K562 (cell line): ENCODE measurements at regions of chr13 and their contacts with region 1.

Region 1: DNA sequence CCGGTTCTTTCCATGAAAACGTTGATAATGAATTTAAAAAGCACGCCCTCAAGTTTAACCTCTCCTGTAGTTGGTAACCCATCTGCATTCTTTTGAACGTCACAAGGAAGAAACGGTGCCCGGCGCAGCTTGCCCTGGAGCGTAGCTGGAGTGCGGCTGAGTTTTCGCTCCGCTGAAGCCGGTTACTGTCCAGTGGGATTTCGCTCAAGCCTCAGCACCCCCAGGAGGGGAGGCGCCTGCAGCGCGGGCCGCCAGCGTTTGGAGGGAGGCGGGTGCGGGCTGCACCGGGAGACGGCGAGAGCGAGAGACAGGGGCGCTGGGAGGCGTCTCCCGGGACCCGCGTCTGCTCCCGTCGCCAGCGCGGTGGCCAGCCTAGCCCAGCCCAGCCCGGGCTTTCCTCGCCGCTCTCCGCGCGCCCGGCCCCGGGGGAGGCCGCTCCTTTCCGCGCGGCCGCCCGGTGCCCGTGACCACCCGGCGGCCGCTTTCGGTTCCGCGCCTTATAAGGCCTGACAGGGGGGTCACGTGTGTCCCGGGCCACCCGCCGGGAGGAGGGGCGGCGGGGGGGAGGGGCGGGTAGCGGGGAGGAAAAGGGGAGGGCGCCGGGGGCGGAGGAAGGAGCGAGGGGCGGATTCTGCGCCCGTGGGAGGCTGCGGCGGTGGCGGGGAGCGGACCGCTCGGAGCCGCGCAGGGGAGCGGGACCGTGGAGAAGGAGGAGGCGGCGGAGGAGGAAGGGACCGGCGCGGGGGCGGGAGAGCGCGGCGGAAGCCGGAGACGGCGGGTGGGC is 8.3 kb upstream of the DGKH start:
- DNase-seq: peak; percentile 83 to 94 (median 88)
- ATAC-seq: peak; percentile 87
- H3K4me3 ChIP-seq: peak overlapping the region; percentile 51
- H3K27ac ChIP-seq: peak overlapping the region; percentile 72
- H3K4me1 ChIP-seq: peaks cover 10 to 13% of the 10 kb centered on the region in 2 experiments; a peak in 4 of 5 replicates
- H3K27me3 ChIP-seq: no peaks in the 10 kb centered on the region
- CTCF ChIP-seq: 0 out of 6 replicates have a peak, but pooled peaks of 1 of the 3 experiments have one; percentile 12
- EP300 ChIP-seq: no peak
- POLR2A ChIP-seq: peak; percentile 76
- RAD21 ChIP-seq: peak in 1 of 2 experiments; percentile 8; a peak in 1 of 4 replicates

Region 2: GRCh38 chr13:41916173-41916954 is 123.8 kb before region 1 on chr13:
- CTCF ChIA-PET with region 1: no interaction called
- POLR2A ChIA-PET with region 1: no interaction called
- in situ Hi-C with region 1: no loop called
- intact Hi-C with region 1: loop called (anchors 10 kb)
- DNase-seq: peak in 2 of 4 experiments; percentile 18 to 35
- ATAC-seq: peak; percentile 63
- H3K4me3 ChIP-seq: no peak overlapping the region
- H3K27ac ChIP-seq: peak overlapping the region; percentile 35; the same call in 1 of the 3 replicates
- H3K4me1 ChIP-seq: peaks cover 0 to 17% of the 10 kb centered on the region in 2 experiments; a peak in 4 of 5 replicates
- H3K27me3 ChIP-seq: no peaks in the 10 kb centered on the region
- CTCF ChIP-seq: no peak
- EP300 ChIP-seq: no peak
- POLR2A ChIP-seq: no peak
- RAD21 ChIP-seq: no peak

Region 3: DNA sequence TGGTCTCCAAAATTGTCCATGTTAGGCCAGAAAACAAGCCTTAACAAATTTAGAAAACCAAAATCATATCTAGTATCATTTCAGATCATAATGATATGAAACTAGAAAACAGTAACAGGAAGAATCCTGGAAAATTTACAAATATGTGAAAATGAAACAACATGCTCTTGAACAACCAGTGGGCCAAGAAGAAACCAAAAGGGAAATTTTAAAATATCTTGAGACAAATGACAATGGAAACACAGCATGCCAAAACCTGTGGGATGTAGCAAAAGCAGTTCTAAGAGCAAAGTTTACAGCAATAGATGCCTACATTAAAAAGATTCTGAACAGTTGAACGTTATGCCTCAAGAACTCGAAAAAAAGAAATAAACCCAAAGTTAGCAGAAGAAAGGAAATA is 111.8 kb before region 1 on chr13:
- CTCF ChIA-PET with region 1: no interaction called
- POLR2A ChIA-PET with region 1: no interaction called
- in situ Hi-C with region 1: no loop called
- intact Hi-C with region 1: no loop called
- DNase-seq: no peak
- ATAC-seq: no peak
- H3K4me3 ChIP-seq: no peak overlapping the region
- H3K27ac ChIP-seq: no peak overlapping the region
- H3K4me1 ChIP-seq: no peaks in the 10 kb centered on the region
- H3K27me3 ChIP-seq: no peaks in the 10 kb centered on the region
- CTCF ChIP-seq: no peak
- EP300 ChIP-seq: no peak
- POLR2A ChIP-seq: no peak
- RAD21 ChIP-seq: no peak

Region 4: DNA sequence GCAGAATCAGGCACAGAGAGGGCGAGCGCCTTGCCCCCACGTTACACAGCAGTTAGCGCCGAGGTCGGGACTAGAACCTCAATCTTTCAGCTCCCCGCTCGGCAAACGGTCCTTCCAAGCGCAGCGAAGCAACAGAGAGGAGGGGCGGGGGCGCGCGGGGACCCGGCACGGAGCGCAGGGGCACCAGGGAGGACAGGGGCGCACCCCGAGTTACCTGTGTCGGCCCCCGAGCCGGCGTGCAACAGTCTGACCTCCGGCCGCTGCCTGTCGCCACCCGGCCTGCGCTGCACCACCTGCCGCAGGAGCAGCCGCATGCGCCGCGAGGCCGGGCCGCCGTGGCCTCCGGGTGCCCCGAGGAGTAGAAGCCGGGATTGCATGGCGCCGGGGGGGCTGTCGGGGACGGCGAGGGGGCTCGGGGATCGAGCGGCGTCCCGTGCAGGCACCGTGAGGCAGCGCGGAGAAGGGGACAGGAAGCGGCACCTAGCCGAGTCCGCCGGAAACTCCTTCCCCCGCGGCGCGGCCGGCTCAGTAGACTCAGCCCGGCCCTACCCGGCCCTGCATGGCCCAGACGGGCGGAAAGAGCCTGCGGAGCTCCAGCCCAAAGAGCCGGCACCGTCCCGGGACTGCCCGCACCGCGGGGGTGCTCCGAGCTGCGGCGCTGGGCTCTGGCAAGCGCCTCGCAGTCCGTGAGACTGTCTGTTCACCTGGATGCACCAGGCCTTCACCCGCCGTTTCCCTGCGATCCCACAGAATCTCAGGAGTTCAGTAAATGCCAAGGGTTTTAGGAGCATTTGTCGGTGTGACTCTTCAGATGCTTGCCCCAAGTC is 79.3 kb before region 1 on chr13 and contains the start of gene VWA8:
- CTCF ChIA-PET with region 1: no interaction called
- POLR2A ChIA-PET with region 1: no interaction called
- in situ Hi-C with region 1: no loop called
- intact Hi-C with region 1: loop called (anchors 5 kb)
- DNase-seq: peak; percentile 53 to 82 (median 66)
- ATAC-seq: peak; percentile 91
- H3K4me3 ChIP-seq: peak within 1 kb of the TSS; percentile 88
- H3K27ac ChIP-seq: peak within 1 kb of the TSS; percentile 83
- H3K4me1 ChIP-seq: peaks cover 3 to 9% of the 10 kb centered on the region in 2 experiments; a peak in 3 of 5 replicates
- H3K27me3 ChIP-seq: no peaks in the 10 kb centered on the region
- CTCF ChIP-seq: no peak
- EP300 ChIP-seq: no peak
- POLR2A ChIP-seq: peak; percentile 73
- RAD21 ChIP-seq: no peak
- polyA plus RNA-seq, gene VWA8: 2.1 to 2.5 TPM

Region 5: GRCh38 chr13:41995946-41996345 is 44.2 kb before region 1 on chr13:
- CTCF ChIA-PET with region 1: no interaction called
- POLR2A ChIA-PET with region 1: no interaction called
- in situ Hi-C with region 1: no loop called
- intact Hi-C with region 1: loop called (anchors 5 kb)
- DNase-seq: peak; percentile 68 to 88 (median 75)
- ATAC-seq: peak; percentile 98
- H3K4me3 ChIP-seq: no peak overlapping the region
- H3K27ac ChIP-seq: peak overlapping the region; percentile 32
- H3K4me1 ChIP-seq: peaks cover 0 to 9% of the 10 kb centered on the region in 2 experiments; a peak in 2 of 5 replicates
- H3K27me3 ChIP-seq: no peaks in the 10 kb centered on the region; a peak in 1 of 5 replicates
- CTCF ChIP-seq: peak; percentile 15 to 50 (median 24); a peak in 3 of 6 replicates
- EP300 ChIP-seq: peak; percentile 83
- POLR2A ChIP-seq: no peak
- RAD21 ChIP-seq: no peak

Region 6: DNA sequence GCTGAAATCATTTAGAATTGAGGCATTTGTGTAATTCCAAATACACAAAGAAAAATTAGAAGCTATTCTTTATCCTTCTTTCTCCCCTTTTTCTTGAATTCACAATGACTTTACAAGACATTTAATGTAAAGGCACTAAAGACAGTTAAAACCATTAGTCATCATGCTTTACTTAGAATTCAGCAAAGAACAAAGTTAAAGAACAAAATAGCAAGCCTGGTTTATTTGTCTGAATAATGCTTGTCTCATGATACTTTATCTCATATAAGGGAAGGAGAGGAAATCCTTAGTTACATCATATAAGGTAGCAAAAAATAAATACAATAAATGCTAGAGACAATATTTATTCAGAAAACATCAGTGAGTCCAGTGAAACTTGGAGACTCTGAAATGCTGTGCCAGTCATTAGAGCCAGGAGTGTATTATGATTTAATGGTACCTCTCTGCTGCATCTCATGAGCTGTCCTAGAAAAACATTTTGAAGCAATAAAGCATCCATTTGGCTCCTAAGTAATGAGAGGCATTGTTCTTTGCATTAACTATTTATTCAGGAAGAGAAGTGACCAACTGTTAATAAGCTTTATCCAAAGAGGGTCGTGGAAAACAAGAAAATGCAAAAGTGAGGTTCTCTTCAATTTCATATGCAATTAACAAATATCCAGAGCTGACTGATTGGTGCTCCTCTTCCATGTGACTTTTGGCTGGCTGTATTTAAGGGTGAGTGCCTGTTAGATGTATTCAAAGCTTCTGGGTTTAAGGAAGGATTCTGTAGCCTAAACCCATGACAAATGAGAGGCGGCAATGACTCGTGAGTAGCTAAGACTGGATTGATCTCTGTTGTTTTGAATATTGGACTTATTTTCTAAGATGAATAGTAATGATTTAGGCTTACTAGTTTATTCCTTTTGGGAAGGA is 113.3 kb after region 1 on chr13:
- CTCF ChIA-PET with region 1: no interaction called
- POLR2A ChIA-PET with region 1: no interaction called
- in situ Hi-C with region 1: no loop called
- intact Hi-C with region 1: no loop called
- DNase-seq: no peak
- ATAC-seq: no peak
- H3K4me3 ChIP-seq: no peak overlapping the region
- H3K27ac ChIP-seq: no peak overlapping the region
- H3K4me1 ChIP-seq: 0 out of 5 replicates have a peak, but pooled peaks cover 0 to 2% of the 10 kb centered on the region in 2 experiments
- H3K27me3 ChIP-seq: no peaks in the 10 kb centered on the region
- CTCF ChIP-seq: no peak
- EP300 ChIP-seq: no peak
- POLR2A ChIP-seq: no peak
- RAD21 ChIP-seq: no peak

Region 7: DNA sequence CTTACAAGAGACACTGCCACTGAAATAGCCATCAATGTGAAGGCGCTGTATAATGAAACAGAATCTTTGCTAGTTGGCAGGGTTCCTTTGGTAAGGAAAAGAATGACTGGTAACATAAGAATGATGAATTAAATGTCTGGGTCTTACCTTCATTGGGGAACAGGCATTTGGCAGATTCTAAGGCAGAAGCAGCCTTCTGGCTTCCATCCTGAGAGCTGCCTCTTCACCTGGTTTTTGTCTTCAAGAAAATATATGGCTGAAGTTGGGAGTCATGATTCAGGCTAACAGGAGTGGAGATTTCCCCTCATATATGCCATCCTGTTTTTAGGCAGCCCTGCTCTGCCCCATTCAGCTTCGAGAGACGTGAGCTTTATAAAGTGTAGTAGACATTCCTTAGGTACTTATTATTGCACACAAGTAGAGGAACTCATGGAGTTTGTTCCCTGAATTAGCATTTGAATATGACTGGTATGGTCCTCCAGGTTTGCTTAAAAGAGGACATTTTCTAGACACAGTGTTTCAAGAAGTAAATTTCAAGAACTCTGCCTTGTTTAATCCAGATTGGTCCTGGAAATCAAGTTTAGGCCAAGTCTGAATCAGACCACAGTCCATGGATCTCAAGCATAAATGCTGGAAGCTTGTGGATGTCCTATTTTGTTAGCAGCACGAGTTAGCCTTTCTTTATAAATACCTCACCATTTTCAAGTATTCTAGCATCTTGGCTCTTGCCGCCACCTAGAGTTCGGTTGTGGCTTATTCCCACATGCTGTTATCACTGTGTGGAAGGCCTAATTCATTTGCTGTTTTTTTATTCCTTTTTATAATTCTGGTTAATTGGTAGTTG is 175.7 kb after region 1 on chr13:
- CTCF ChIA-PET with region 1: no interaction called
- POLR2A ChIA-PET with region 1: no interaction called
- in situ Hi-C with region 1: no loop called
- intact Hi-C with region 1: loop called (anchors 10 kb)
- DNase-seq: peak; percentile 4 to 45 (median 10)
- ATAC-seq: peak; percentile 92
- H3K4me3 ChIP-seq: no peak overlapping the region
- H3K27ac ChIP-seq: no peak overlapping the region
- H3K4me1 ChIP-seq: no peaks in the 10 kb centered on the region; a peak in 2 of 5 replicates
- H3K27me3 ChIP-seq: no peaks in the 10 kb centered on the region
- CTCF ChIP-seq: peak; percentile 52 to 67 (median 66); a peak in 5 of 6 replicates
- EP300 ChIP-seq: no peak
- POLR2A ChIP-seq: no peak
- RAD21 ChIP-seq: peak; percentile 64 to 76

Region 8: GRCh38 chr13:42271337-42272114 is 231.4 kb after region 1 on chr13:
- CTCF ChIA-PET with region 1: no interaction called
- POLR2A ChIA-PET with region 1: no interaction called
- in situ Hi-C with region 1: no loop called
- intact Hi-C with region 1: loop called (anchors 10 kb)
- DNase-seq: peak; percentile 93
- ATAC-seq: peak; percentile 70
- H3K4me3 ChIP-seq: peak overlapping the region; percentile 83
- H3K27ac ChIP-seq: peak overlapping the region; percentile 68
- H3K4me1 ChIP-seq: peaks cover 8 to 15% of the 10 kb centered on the region in 2 experiments; a peak in 4 of 5 replicates
- H3K27me3 ChIP-seq: no peaks in the 10 kb centered on the region
- CTCF ChIP-seq: peak in 1 of 3 experiments; percentile 18; a peak in 1 of 6 replicates
- EP300 ChIP-seq: no peak
- POLR2A ChIP-seq: no peak
- RAD21 ChIP-seq: no peak

Region 9: DNA sequence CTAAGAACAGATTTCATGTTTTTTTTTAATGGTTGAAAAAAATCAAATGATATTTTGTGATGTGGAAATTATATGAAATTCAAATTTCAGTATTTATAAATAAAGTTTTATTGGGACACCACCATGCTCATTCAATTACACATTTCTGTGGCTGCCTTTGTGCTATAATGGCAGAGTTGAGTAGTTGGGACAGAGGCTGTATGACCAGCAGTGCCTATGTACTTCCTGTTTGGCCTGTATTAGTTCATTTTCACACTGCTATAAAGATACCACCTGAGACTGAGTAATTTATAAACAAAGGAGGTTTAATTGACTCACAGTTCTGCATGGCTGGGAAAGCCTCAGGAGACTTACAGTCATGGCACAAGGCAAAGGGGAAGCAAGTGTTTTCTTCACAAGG is 265.4 kb after region 1 on chr13:
- CTCF ChIA-PET with region 1: no interaction called
- POLR2A ChIA-PET with region 1: no interaction called
- in situ Hi-C with region 1: no loop called
- intact Hi-C with region 1: no loop called
- DNase-seq: no peak
- ATAC-seq: no peak
- H3K4me3 ChIP-seq: no peak overlapping the region
- H3K27ac ChIP-seq: no peak overlapping the region
- H3K4me1 ChIP-seq: no peaks in the 10 kb centered on the region
- H3K27me3 ChIP-seq: no peaks in the 10 kb centered on the region
- CTCF ChIP-seq: no peak
- EP300 ChIP-seq: no peak
- POLR2A ChIP-seq: no peak
- RAD21 ChIP-seq: no peak

Region 10: GRCh38 chr13:42412812-42413483 is 372.8 kb after region 1 on chr13:
- CTCF ChIA-PET with region 1: no interaction called
- POLR2A ChIA-PET with region 1: no interaction called
- in situ Hi-C with region 1: no loop called
- intact Hi-C with region 1: no loop called
- DNase-seq: no peak
- ATAC-seq: no peak
- H3K4me3 ChIP-seq: no peak overlapping the region
- H3K27ac ChIP-seq: no peak overlapping the region
- H3K4me1 ChIP-seq: no peaks in the 10 kb centered on the region
- H3K27me3 ChIP-seq: no peaks in the 10 kb centered on the region
- CTCF ChIP-seq: no peak
- EP300 ChIP-seq: no peak
- POLR2A ChIP-seq: no peak
- RAD21 ChIP-seq: no peak